ENCODE measurements at regions of chr7 and their contacts with region 1.

Region 1: GRCh38 chr7:332646-333392 is 42.8 kb downstream of the FOXL3 start:
- DNase-seq: peak; percentile 94

Region 2: DNA sequence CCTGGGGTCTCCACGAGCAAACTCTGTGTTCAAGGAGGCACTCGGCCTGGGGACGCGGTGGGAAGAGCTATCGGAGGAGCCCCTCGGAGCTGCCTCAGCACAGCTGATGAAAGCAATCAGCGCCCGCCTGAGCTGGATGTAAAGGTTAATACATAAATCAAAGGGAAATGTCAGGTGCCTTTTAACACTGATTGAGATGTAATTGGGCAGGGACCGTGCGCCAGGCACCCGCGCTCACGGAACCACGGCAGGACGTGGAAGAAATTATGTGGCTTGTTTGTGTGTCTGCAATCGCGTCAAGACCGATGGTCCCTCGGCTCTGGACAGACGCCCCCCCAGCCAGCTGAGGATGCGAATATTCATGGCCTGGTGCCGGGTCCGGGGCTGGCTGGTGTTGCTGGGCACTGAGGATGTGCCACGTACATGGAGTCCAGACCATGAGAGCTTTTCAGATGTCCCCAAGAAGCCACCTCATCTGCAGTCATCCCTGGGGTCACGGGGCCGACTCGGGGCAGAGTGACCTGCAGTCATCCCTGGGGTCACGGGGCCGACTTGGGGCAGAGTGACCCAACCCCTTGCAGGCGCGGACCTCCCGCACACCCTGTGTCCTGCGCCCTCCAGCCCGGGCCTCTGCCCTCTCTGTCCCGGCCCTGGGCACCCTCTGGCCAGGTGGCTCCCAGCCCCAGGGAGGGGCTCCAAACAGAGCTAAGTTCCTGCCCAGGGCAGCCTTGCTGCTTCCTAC is 27.2 kb before region 1 on chr7:
- intact Hi-C with region 1: no loop called
- DNase-seq: peak; percentile 64

Region 3: DNA sequence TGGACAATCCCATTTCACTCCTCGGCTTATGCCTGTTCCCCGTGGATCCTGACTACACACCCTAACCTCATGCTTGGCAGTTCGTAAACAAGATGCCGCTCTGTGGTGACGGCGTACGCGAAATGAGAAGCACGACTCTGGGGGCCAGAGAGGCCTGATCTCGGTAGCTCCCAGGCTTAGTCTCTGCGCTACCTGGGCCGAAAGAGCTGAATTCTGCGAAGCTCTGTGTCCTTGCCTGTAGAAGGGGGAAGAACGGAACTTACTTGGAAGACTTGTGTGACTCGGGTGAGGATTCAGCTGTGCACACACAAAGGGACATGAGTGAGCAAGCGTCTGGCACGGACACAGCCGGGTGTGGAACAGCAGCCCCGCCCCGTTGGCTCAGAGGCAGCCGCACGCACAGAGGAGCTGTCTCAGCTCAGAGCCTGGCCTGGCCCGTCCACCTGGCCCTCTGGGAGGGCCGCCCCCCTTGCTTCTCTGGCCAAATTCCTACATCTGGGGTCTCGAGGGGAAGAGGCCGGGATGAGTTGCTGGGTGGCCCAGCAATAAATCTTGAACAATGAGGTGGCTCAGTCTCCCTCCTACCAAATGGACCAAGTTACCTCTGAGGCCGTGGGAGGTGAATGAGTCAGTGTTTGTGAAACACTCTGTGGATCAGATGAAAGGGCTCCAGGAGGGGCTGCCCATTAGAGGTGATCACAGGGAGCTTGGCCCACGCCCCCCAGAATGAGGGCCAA is 103.0 kb after region 1 on chr7:
- intact Hi-C with region 1: no loop called
- DNase-seq: no peak

Region 4: GRCh38 chr7:503575-504111 is 170.8 kb after region 1 on chr7:
- intact Hi-C with region 1: loop called in 1 of 2 experiments (anchors 10 kb)
- DNase-seq: peak; percentile 87

Region 5: GRCh38 chr7:513521-514166 is 180.8 kb after region 1 on chr7:
- intact Hi-C with region 1: loop called (anchors 2 to 10 kb)
- DNase-seq: no peak

Region 6: GRCh38 chr7:636396-636795 is 303.6 kb after region 1 on chr7:
- intact Hi-C with region 1: loop called in 1 of 2 experiments (anchors 10 kb)
- DNase-seq: peak; percentile 85

Measured in posterior vena cava (tissue), 2 donors.